ENCODE measurements at regions of chr13 and their contacts with region 1.

Region 1: GRCh38 chr13:111893071-111893606 is 173.8 kb upstream of the SOX1 start:
- DNase-seq: no peak
- H3K4me3 ChIP-seq: no peak overlapping the region
- H3K27ac ChIP-seq: no peak overlapping the region
- H3K4me1 ChIP-seq: no peaks in the 10 kb centered on the region
- H3K27me3 ChIP-seq: peaks cover 0 to 22% of the 10 kb centered on the region in 2 donors
- CTCF ChIP-seq: no peak

Region 2: GRCh38 chr13:111864566-111864965 is 28.6 kb before region 1 on chr13:
- intact Hi-C with region 1: loop called (anchors 1 kb)
- DNase-seq: peak in 1 of 2 donors; percentile 54
- H3K4me3 ChIP-seq: no peak overlapping the region
- H3K27ac ChIP-seq: no peak overlapping the region
- H3K4me1 ChIP-seq: no peaks in the 10 kb centered on the region
- H3K27me3 ChIP-seq: no peaks in the 10 kb centered on the region
- CTCF ChIP-seq: no peak

Measured in tibial artery (tissue), 4 donors.